A549 (cell line): ENCODE measurements at regions of chrX and their contacts with region 1.

Region 1: DNA sequence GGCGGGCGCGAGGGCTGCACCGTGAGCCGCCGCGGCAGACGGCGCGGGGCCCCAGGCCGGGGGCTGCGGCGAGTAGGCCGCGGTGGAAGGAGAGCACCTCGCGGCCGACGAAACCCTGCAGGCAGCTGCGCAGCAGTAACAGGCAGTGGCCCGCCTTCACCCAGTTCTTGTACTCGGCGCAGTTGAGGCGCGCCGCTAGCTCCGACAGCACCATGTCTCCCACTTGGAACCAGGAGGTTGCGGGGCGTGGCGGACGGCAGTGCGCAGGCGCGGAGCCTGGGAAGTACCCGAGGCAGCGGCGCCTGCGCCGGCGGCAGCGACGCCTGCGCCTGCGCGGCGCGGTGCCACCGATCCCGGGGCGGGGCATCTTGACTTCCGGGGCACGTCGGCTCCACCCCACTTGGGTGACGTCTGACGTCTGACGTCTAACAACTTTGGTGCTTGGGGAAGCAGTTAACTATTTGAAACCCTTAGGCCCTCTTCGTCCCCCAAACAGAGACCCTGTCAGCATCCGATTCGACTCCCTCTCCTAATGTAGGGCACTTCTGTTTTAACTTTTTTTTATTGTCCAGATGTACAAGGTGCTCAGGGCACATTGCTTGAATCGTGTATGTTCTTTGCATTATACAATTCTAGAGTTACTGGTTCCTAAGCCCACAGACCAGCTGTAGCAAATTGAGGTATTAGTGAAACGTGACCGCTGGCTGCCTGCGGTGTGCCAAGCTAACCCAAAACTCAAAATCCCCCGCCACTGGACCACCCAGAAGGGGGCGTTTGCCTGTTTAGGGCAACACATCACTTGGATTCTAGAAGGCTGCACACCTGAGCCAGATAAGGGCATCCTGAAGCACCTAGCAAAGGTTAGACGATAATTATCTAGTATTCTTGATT is at the start of gene CXorf38:
- DNase-seq: peak; percentile 69 to 91
- ATAC-seq: peak; percentile 84 to 92
- H3K4me3 ChIP-seq: peak within 1 kb of the TSS; percentile 97
- H3K27ac ChIP-seq: peak within 1 kb of the TSS; percentile 86 to 96
- H3K4me1 ChIP-seq: peaks cover 19% of the 10 kb centered on the region
- CTCF ChIP-seq: no peak
- EP300 ChIP-seq: no peak
- POLR2A ChIP-seq: peak; percentile 65
- RAD21 ChIP-seq: no peak
- polyA plus RNA-seq, gene CXorf38: 12.5 and 14.3 TPM in 2 replicates

Region 2: GRCh38 chrX:40663880-40664633 is 16.5 kb after region 1 on chrX:
- CTCF ChIA-PET with region 1: interaction called, 11 read pairs
- POLR2A ChIA-PET with region 1: no interaction called
- DNase-seq: peak in 1 of 2 experiments; percentile 39
- ATAC-seq: peak; percentile 50 to 75; a peak in 3 of 6 replicates
- H3K4me3 ChIP-seq: no peak overlapping the region
- H3K27ac ChIP-seq: no peak overlapping the region
- H3K4me1 ChIP-seq: no peaks in the 10 kb centered on the region
- CTCF ChIP-seq: peak; percentile 23; the same call in 1 of the 3 replicates
- EP300 ChIP-seq: no peak
- POLR2A ChIP-seq: no peak
- RAD21 ChIP-seq: peak in 1 of 2 experiments; percentile 33; a peak in 3 of 5 replicates

Region 3: GRCh38 chrX:40729598-40730584 is 82.3 kb after region 1 on chrX:
- CTCF ChIA-PET with region 1: no interaction called
- POLR2A ChIA-PET with region 1: no interaction called
- DNase-seq: no peak
- ATAC-seq: no peak
- H3K4me3 ChIP-seq: no peak overlapping the region
- H3K27ac ChIP-seq: no peak overlapping the region
- H3K4me1 ChIP-seq: peaks cover 15% of the 10 kb centered on the region; the same call in 2 of the 3 replicates
- CTCF ChIP-seq: no peak
- EP300 ChIP-seq: no peak
- POLR2A ChIP-seq: no peak
- RAD21 ChIP-seq: no peak

Region 4: DNA sequence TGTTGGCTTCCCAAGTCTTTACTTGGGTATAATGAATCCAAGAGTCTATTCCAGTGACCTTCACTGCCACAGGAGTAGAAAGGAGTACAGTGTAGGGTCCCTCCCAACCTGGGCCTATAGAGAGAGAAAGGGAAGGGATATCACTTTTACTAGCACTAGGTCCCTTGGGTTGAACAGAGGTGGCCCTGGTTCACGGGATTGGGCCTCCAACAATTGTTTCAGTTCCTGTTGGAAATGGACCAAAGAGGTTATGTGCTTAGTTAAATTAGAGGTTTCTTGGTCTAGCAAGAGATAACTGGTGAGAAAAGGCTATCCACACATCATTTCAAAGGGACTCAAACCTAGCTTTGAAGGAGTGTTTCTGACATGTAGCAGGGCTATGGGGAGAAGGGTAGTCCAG is 144.9 kb after region 1 on chrX:
- CTCF ChIA-PET with region 1: interaction called, 19 read pairs
- POLR2A ChIA-PET with region 1: no interaction called
- DNase-seq: no peak
- ATAC-seq: no peak
- H3K4me3 ChIP-seq: no peak overlapping the region
- H3K27ac ChIP-seq: no peak overlapping the region
- H3K4me1 ChIP-seq: peaks cover 7% of the 10 kb centered on the region
- CTCF ChIP-seq: no peak
- EP300 ChIP-seq: no peak
- POLR2A ChIP-seq: no peak
- RAD21 ChIP-seq: no peak